ENCODE measurements at regions of chr5 and their contacts with region 1.

Region 1: DNA sequence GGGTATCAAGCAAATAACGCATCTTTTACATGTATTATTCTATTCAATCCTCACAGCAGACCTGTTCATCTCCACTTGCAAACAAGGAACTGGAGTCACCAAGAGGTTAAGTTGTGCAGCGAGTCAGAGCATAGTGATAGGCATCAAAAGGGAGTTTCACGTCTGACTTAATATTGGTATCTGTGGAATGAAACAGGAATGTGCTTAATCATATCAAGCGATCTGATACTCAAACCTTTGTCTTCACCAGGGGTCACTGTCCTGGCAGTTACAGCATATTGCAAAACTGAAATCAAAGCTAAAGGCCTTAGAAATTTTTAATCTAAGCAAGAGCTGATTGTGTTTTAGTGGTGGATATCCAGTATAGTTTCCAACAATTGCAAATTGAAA is 271.6 kb downstream of the PLK2 start:
- DNase-seq: peak; percentile 60 to 99
- H3K4me3 ChIP-seq: peak overlapping the region; percentile 1; the same call in 1 of the 2 replicates
- H3K27ac ChIP-seq: peak overlapping the region; percentile 94
- H3K4me1 ChIP-seq: peaks cover 80% of the 10 kb centered on the region
- H3K27me3 ChIP-seq: no peaks in the 10 kb centered on the region
- CTCF ChIP-seq: no peak

Region 2: GRCh38 chr5:57298295-57298984 is 889.8 kb before region 1 on chr5:
- CTCF ChIA-PET with region 1: no interaction called
- POLR2A ChIA-PET with region 1: no interaction called
- intact Hi-C with region 1: loop called (anchors 2 kb)
- DNase-seq: peak; percentile 74 to 80
- H3K4me3 ChIP-seq: no peak overlapping the region
- H3K27ac ChIP-seq: peak overlapping the region; percentile 48
- H3K4me1 ChIP-seq: peaks cover 11% of the 10 kb centered on the region; the same call in 1 of the 2 replicates
- H3K27me3 ChIP-seq: no peaks in the 10 kb centered on the region
- CTCF ChIP-seq: peak; percentile 86

Region 3: GRCh38 chr5:57681942-57682341 is 506.3 kb before region 1 on chr5:
- CTCF ChIA-PET with region 1: no interaction called
- POLR2A ChIA-PET with region 1: interaction called, 11 read pairs
- intact Hi-C with region 1: no loop called
- DNase-seq: peak; percentile 26 to 68
- H3K4me3 ChIP-seq: no peak overlapping the region
- H3K27ac ChIP-seq: no peak overlapping the region
- H3K4me1 ChIP-seq: peaks cover 10% of the 10 kb centered on the region
- H3K27me3 ChIP-seq: no peaks in the 10 kb centered on the region
- CTCF ChIP-seq: no peak

Region 4: DNA sequence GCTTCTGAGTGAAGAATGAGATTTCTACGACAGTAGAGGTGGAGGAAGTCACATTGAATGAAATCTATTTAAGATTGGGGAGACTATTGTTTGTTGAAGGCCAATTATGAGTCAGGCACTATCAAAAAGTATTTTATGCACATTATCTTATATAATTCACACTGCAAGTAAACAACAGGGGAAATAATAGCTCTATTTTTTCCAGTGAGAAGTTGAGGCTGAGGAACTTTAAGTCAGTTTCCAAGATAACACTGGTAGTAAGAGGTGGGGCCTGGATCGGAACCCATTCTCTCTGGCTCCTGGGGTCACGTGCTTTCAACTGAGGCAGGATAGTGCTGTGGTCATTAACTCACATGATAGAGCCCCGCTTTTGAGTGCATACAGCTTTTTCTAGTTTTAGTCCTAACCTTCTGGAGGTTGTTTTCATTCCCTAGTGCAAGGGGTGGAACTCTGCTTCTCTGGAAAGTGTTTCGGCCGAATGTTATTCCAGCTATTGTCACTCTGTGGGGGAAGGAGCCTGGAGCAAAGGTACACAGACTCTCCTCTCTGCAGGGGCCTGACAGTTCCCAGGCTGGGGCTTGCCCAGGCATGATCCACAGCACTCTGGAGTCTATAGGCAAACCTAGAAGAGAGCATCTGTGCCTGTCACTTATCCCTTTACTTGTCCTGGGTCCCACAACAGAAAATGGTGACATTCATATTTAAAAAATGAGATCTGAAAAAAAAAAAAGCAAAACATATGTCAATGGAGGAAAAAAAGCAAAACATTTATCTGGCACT is 353.2 kb before region 1 on chr5:
- CTCF ChIA-PET with region 1: no interaction called
- POLR2A ChIA-PET with region 1: interaction called, 9 read pairs
- intact Hi-C with region 1: loop called (anchors 1 kb)
- DNase-seq: no peak
- H3K4me3 ChIP-seq: no peak overlapping the region
- H3K27ac ChIP-seq: no peak overlapping the region
- H3K4me1 ChIP-seq: peaks cover 30% of the 10 kb centered on the region
- H3K27me3 ChIP-seq: no peaks in the 10 kb centered on the region
- CTCF ChIP-seq: no peak

Region 5: DNA sequence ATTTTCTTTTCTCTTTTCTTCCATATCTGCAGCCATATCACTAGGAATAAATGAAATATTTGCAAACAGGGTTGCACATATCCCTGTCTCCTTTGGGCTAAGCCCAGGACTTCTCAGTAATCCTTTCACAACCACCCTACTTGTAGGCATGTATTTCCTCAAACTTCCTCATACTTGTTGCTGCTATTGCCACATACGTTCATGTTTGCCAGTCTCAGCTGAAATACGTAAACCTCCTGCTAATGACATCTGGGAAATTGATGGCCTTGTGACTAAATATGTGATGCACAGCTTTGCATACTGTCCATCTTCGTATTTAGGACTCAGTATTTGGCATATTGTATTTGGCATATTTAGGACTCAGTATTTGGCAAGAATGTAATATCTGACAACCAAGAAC is 47.0 kb after region 1 on chr5:
- CTCF ChIA-PET with region 1: interaction called, 4 read pairs
- POLR2A ChIA-PET with region 1: interaction called, 17 read pairs
- intact Hi-C with region 1: loop called (anchors 1 kb)
- DNase-seq: peak; percentile 27 to 90
- H3K4me3 ChIP-seq: no peak overlapping the region
- H3K27ac ChIP-seq: peak overlapping the region; percentile 52
- H3K4me1 ChIP-seq: peaks cover 43% of the 10 kb centered on the region
- H3K27me3 ChIP-seq: no peaks in the 10 kb centered on the region
- CTCF ChIP-seq: no peak

Region 6: DNA sequence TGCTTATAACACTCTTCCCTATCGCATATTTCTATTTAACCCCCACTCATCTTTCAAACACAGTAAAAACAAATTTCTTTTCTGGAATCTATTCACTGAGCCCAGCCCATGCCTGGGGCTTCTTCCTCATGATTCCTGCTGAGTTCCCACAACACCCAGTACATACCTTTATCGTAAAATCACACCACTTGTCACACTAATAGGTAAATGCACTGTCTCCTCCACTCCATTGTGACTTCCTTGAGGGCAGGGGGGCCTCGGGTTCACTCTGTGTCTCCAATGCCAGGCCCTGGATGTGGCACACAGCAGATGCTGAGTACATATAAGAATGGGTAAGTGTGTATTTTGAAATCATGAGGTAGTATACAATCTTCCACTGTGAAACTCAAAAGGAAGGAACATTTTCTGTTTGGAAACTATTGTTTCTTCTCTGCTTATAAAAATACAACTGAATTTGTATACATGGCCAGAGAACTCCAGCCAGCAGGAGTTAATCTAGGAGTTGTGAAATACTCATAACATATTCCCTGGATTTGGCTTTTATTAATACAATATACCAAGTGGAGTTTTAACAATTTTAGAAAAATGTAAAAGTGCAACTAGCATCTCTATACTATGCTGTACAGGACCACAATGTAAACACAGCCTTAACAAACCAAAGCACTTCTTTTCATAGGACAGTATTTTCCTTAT is 264.5 kb after region 1 on chr5:
- CTCF ChIA-PET with region 1: no interaction called
- POLR2A ChIA-PET with region 1: interaction called, 14 read pairs
- intact Hi-C with region 1: loop called (anchors 1 kb)
- DNase-seq: peak; percentile 64 to 88
- H3K4me3 ChIP-seq: peak overlapping the region; percentile 90; the same call in 1 of the 2 replicates
- H3K27ac ChIP-seq: peak overlapping the region; percentile 96
- H3K4me1 ChIP-seq: peaks cover 38% of the 10 kb centered on the region
- H3K27me3 ChIP-seq: no peaks in the 10 kb centered on the region
- CTCF ChIP-seq: no peak

Measured in PC-9 (cell line).